Activated CD4-positive, alpha-beta memory T cell treated with anti-CD3 and anti-CD28 coated beads, Interleukin-2, amount 10 ng/mL, durations not matched to agents 7 days and 5 days (primary cell): ENCODE measurements at regions of chr7 and their contacts with region 1.

Region 1: DNA sequence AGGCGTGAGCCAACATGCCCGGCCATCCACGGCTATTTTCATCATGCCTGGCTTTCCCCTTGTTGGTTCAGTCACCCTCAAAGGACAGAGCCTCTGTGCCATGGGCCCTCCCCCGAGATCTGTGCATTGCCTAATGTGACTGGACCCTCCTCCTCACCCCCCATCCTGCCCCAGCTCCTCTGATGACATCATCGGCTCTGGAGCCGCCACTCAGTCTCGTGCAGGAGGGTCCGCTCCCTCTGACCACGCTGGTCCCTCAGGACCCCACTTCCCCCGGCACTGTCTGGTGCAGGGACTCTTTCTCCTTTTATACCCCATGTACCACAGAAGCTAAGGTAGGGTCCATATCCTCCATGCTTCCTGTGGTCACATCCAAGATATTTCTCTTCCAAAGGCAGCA is 33.2 kb upstream of the BAIAP2L1 start:
- DNase-seq: no peak
- H3K4me3 Mint-ChIP-seq: no peak overlapping the region
- H3K27ac Mint-ChIP-seq: no peak overlapping the region
- H3K4me1 Mint-ChIP-seq: peaks cover 8% of the 10 kb centered on the region
- H3K27me3 Mint-ChIP-seq: no peaks in the 10 kb centered on the region

Region 2: GRCh38 chr7:98409843-98410242 is 24.3 kb before region 1 on chr7:
- CTCF ChIA-PET with region 1: no interaction called
- POLR2A ChIA-PET with region 1: no interaction called
- DNase-seq: no peak
- H3K4me3 Mint-ChIP-seq: no peak overlapping the region
- H3K27ac Mint-ChIP-seq: no peak overlapping the region
- H3K4me1 Mint-ChIP-seq: no peaks in the 10 kb centered on the region
- H3K27me3 Mint-ChIP-seq: no peaks in the 10 kb centered on the region

Region 3: DNA sequence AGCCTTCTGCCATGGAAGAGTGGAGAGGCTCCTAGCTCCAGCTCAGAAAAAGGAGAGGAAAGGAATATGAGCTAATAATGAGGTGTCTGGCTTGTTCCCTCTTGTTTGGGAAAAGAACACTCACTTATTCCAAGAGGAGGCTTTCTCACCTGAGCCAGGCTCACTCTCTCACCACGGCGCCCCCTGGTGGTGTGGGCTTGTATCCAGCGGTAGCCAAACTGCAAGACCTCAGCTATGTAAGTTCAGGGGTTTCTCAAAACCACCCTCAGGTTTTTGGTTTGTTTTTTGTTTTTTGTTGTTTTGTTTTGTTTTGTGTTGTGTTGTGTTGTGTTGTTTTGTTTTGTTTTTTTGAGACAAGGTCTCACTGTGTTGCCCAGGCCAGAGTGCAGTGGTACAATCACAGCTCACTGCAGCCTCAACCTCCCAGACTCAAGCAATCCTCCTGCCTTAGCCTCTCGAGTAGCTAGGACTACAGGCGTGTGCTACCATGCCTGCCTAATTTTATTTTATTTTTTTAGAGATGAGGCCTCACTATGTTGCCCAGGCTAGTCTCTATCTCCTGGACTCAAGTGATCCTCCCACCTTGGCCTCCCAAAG is 311.7 kb after region 1 on chr7:
- CTCF ChIA-PET with region 1: interaction called, 20 read pairs
- POLR2A ChIA-PET with region 1: interaction called, 3 read pairs
- DNase-seq: peak; percentile 72
- H3K4me3 Mint-ChIP-seq: no peak overlapping the region
- H3K27ac Mint-ChIP-seq: no peak overlapping the region
- H3K4me1 Mint-ChIP-seq: no peaks in the 10 kb centered on the region
- H3K27me3 Mint-ChIP-seq: no peaks in the 10 kb centered on the region